GM12878 (cell line): ENCODE measurements at regions of chr16 and their contacts with region 1.

Region 1: DNA sequence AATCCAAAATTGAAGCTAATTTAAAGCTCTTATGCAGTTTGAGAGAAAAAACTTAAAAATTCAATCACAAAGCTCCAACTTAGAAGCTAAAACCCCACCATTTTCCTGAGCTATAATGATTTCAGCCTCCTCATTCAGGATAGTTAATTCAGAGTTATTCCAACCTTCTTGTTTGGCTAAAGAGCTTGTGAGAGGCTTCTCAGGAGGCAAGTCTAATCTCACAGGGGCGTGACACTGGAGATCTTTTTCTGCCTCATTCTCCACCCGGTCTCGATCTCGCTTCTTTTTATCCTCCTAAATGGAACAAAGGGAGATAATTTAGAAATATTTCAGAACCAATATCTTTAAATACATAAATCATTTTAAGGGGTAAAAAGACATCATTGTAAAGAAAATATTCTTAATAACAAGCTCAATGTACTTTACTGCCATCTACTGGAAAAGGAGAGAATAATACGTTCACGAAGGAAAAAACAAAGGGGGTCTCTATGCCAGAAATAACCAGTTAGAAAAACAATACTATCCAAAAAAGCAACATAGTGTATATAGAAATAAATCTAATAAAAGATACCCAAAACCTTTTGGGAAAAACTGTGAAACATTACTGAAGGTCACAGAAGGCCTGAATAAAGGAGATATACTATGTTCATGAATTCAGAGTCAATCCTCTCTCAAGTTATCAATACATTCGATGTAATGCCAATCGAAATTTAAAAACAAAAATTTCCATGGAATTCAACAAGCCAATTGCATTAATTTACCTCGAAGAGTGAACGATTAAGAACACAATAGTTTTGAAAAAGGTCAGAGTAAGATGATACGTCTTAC is 13.9 kb downstream of the BRD7 start:
- DNase-seq: no peak
- ATAC-seq: no peak
- H3K4me3 ChIP-seq: no peak overlapping the region
- H3K27ac ChIP-seq: no peak overlapping the region
- H3K4me1 ChIP-seq: no peaks in the 10 kb centered on the region
- H3K27me3 ChIP-seq: no peaks in the 10 kb centered on the region
- CTCF ChIP-seq: peak; percentile 31 to 52 (median 50); a peak in 4 of 6 replicates
- EP300 ChIP-seq: no peak
- POLR2A ChIP-seq: no peak
- RAD21 ChIP-seq: no peak

Region 2: GRCh38 chr16:50065624-50066481 is 289.0 kb before region 1 on chr16 and contains the start of gene HEATR3:
- CTCF ChIA-PET with region 1: interaction called, 35 read pairs
- POLR2A ChIA-PET with region 1: no interaction called
- RAD21 ChIA-PET with region 1: interaction called, 11 read pairs
- SMC1A ChIA-PET with region 1: interaction called, 5 read pairs
- in situ Hi-C with region 1: no loop called
- intact Hi-C with region 1: no loop called
- DNase-seq: peak; percentile 82
- ATAC-seq: peak; percentile 93
- H3K4me3 ChIP-seq: peak within 1 kb of the TSS; percentile 99
- H3K27ac ChIP-seq: peak within 1 kb of the TSS; percentile 86
- H3K4me1 ChIP-seq: peaks cover 15% of the 10 kb centered on the region
- H3K27me3 ChIP-seq: no peaks in the 10 kb centered on the region
- CTCF ChIP-seq: no peak
- EP300 ChIP-seq: no peak
- POLR2A ChIP-seq: peak; percentile 89
- RAD21 ChIP-seq: no peak
- polyA plus RNA-seq, gene HEATR3: 1.5 to 5.0 TPM

Region 3: DNA sequence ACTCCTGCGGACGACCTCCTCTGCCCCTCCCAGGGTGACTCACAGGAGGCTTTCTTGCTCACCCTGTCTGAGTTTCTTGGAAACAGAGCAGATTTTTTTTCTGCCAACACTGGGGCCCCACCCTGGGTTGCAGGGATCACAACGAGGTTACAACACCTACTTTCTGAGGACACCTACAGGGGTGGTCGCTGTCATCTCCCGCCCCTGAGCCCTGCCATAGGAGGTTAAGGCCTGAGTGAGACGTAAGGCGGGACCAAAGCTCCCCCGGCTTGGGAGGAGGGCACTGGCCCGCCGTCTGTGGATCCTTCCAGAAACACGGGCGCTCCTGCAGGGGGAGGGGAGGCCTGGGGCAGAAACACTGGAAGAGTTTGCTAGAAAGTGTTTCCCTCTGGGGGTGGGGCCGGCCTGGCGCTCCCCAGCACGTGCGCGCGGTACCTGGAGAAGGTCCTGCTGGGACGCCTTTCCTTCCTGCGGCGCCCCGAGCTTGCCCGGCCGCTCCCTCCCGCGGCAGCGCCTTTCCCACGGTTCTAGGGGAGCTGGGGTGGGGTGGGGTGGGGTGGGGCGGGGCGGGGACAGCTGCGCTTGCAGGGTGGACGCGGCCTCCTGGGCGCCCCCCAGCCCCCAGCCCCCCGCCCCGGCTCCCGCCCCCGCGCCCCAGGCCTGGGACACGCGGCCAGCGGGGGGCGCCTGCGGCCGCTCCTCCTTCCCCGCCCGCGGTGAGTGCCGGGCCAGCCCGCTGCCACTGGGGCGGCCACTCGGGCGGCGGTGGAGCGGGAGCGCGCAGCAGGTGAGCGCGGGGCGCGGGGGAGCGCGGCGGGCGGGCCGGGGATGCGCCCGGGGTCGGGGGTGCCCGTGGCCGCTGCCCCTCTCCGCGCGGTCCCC is 109.2 kb before region 1 on chr16:
- CTCF ChIA-PET with region 1: interaction called, 102 read pairs
- POLR2A ChIA-PET with region 1: no interaction called
- RAD21 ChIA-PET with region 1: interaction called, 12 read pairs
- SMC1A ChIA-PET with region 1: interaction called, 6 read pairs
- in situ Hi-C with region 1: no loop called
- intact Hi-C with region 1: loop called (anchors 10 kb)
- DNase-seq: no peak
- ATAC-seq: peak; percentile 88
- H3K4me3 ChIP-seq: peak overlapping the region; percentile 75
- H3K27ac ChIP-seq: no peak overlapping the region
- H3K4me1 ChIP-seq: no peaks in the 10 kb centered on the region
- H3K27me3 ChIP-seq: no peaks in the 10 kb centered on the region
- CTCF ChIP-seq: peak in 2 of 3 experiments; percentile 14 to 48; a peak in 3 of 6 replicates
- EP300 ChIP-seq: no peak
- POLR2A ChIP-seq: 0 out of 2 replicates have a peak, but pooled peaks have one; percentile 19
- RAD21 ChIP-seq: peak; percentile 49

Region 4: GRCh38 chr16:50273681-50274325 is 81.0 kb before region 1 on chr16:
- CTCF ChIA-PET with region 1: interaction called, 38 read pairs
- POLR2A ChIA-PET with region 1: interaction called, 3 read pairs
- RAD21 ChIA-PET with region 1: interaction called, 6 read pairs
- SMC1A ChIA-PET with region 1: interaction called, 18 read pairs
- in situ Hi-C with region 1: no loop called
- intact Hi-C with region 1: no loop called
- DNase-seq: peak; percentile 64
- ATAC-seq: peak; percentile 80
- H3K4me3 ChIP-seq: peak overlapping the region; percentile 70
- H3K27ac ChIP-seq: peak overlapping the region; percentile 93
- H3K4me1 ChIP-seq: peaks cover 49% of the 10 kb centered on the region
- H3K27me3 ChIP-seq: no peaks in the 10 kb centered on the region
- CTCF ChIP-seq: no peak
- EP300 ChIP-seq: peak in 1 of 2 experiments; percentile 47; a peak in 2 of 4 replicates
- POLR2A ChIP-seq: peak; percentile 59
- RAD21 ChIP-seq: no peak

Region 5: DNA sequence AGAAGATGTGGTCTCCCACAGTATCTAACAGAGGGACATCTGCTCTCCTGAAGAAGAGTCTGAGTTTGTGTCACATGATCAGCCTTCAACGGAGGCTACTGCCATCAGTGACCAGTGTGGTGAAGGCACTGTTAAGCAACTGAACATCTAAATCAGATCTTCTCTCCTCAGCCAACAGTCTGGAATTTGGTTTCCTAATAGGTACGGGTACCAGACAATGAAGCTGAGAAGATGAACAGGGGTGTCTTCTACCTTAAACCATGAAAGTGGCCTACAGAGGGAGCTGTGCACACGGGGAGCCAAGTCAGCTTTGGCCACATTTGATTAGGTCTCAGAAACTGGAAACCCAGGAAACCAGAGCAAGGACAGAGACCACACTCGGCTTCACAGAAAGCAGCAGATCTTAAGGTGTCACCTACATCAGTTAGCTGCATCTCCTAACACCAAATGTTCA is 27.9 kb before region 1 on chr16:
- CTCF ChIA-PET with region 1: interaction called, 51 read pairs
- POLR2A ChIA-PET with region 1: interaction called, 3 read pairs
- RAD21 ChIA-PET with region 1: interaction called, 4 read pairs
- SMC1A ChIA-PET with region 1: interaction called, 12 read pairs
- in situ Hi-C with region 1: no loop called
- intact Hi-C with region 1: no loop called
- DNase-seq: peak; percentile 25
- ATAC-seq: peak; percentile 93
- H3K4me3 ChIP-seq: no peak overlapping the region
- H3K27ac ChIP-seq: no peak overlapping the region; the same call in 1 of the 2 replicates
- H3K4me1 ChIP-seq: peaks cover 3% of the 10 kb centered on the region; the same call in 1 of the 2 replicates
- H3K27me3 ChIP-seq: no peaks in the 10 kb centered on the region
- CTCF ChIP-seq: peak; percentile 45 to 76 (median 55)
- EP300 ChIP-seq: no peak
- POLR2A ChIP-seq: no peak
- RAD21 ChIP-seq: peak; percentile 72

Region 6: GRCh38 chr16:50368410-50369132 is 13.7 kb after region 1 on chr16 and contains the start of gene BRD7:
- CTCF ChIA-PET with region 1: interaction called, 127 read pairs
- POLR2A ChIA-PET with region 1: no interaction called
- RAD21 ChIA-PET with region 1: interaction called, 12 read pairs
- SMC1A ChIA-PET with region 1: interaction called, 11 read pairs
- in situ Hi-C with region 1: no loop called
- intact Hi-C with region 1: no loop called
- DNase-seq: no peak
- ATAC-seq: peak; percentile 82
- H3K4me3 ChIP-seq: peak within 1 kb of the TSS; percentile 91
- H3K27ac ChIP-seq: peak within 1 kb of the TSS; percentile 54
- H3K4me1 ChIP-seq: no peaks in the 10 kb centered on the region; the same call in 1 of the 2 replicates
- H3K27me3 ChIP-seq: no peaks in the 10 kb centered on the region
- CTCF ChIP-seq: peak in 2 of 3 experiments; percentile 42 to 52; a peak in 3 of 6 replicates
- EP300 ChIP-seq: no peak
- POLR2A ChIP-seq: peak; percentile 49; the same call in 1 of the 2 replicates
- RAD21 ChIP-seq: no peak; the same call in 1 of the 2 replicates
- polyA plus RNA-seq, gene BRD7: 16.9 to 36.5 TPM

Region 7: DNA sequence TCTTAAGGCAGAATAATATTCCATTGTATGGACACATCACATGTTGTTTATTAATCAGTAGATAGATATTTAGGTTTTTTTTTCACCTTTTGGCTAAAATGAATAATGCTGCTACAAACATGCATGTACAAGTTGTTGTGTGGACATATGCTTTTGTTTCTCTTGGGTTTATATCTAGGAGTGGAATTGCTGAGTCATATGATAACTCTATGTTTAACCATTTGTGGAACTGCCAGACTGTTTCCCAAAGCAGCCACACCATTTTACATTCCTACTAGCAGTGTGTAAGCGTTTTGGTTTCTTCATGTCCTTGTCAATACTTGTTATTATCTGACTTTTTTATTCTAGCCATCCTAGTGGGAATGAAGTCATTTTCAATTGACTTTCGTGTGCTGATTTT is 408.4 kb after region 1 on chr16:
- CTCF ChIA-PET with region 1: no interaction called
- POLR2A ChIA-PET with region 1: no interaction called
- RAD21 ChIA-PET with region 1: no interaction called
- SMC1A ChIA-PET with region 1: no interaction called
- in situ Hi-C with region 1: no loop called
- intact Hi-C with region 1: no loop called
- DNase-seq: no peak
- ATAC-seq: no peak
- H3K4me3 ChIP-seq: no peak overlapping the region
- H3K27ac ChIP-seq: no peak overlapping the region
- H3K4me1 ChIP-seq: no peaks in the 10 kb centered on the region
- H3K27me3 ChIP-seq: no peaks in the 10 kb centered on the region
- CTCF ChIP-seq: no peak
- EP300 ChIP-seq: no peak
- POLR2A ChIP-seq: no peak
- RAD21 ChIP-seq: no peak